CD4-positive, alpha-beta memory T cell (primary cell): ENCODE measurements at regions of chr7 and their contacts with region 1.

Region 1: DNA sequence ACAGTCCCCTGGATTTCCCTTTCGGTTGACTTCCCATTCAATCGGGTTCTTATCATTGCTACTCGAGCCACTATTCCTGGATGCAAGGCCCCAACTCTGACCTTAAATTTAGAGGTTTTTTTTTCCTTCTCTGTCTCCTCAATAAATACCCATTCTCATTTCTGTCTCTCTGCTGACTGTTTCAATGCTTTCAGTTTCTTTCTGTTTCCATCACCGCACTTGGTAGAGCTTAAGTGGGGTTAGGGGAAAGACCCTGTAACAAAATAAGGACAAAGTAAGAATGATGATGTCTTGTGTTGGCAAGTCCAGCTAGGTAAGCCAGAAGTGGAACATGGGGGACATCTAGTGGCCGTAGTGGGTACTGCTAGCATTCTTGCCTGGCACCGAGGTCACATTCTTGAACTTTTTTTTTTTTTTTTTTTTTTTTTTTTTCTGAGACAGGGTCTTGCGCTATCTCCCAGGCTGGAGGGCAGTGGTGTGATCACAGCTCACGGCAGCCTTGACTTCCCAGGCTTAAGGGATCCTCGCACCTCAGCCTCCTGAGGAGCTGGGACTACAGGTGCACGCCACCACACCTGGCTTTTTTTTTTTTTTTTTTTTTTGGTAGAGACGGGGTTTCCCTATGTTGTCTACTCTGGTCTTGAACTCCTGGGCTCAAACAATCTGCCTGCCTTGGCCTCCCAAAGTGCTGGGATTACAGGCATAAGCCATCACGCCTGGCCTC is 40.3 kb downstream of the ZC3HC1 start:
- DNase-seq: peak; percentile 79 to 83 (median 80)
- H3K4me3 ChIP-seq: no peak overlapping the region
- H3K4me3 Mint-ChIP-seq: no peak overlapping the region
- H3K27ac ChIP-seq: no peak overlapping the region
- H3K27ac Mint-ChIP-seq: peak overlapping the region in 3 of 7 donors; percentile 62 to 74 (median 65)
- H3K4me1 ChIP-seq: no peaks in the 10 kb centered on the region
- H3K4me1 Mint-ChIP-seq: peaks cover 0 to 4% (median 2%) of the 10 kb centered on the region in 4 donors
- H3K27me3 ChIP-seq: no peaks in the 10 kb centered on the region
- H3K27me3 Mint-ChIP-seq: no peaks in the 10 kb centered on the region

Region 2: DNA sequence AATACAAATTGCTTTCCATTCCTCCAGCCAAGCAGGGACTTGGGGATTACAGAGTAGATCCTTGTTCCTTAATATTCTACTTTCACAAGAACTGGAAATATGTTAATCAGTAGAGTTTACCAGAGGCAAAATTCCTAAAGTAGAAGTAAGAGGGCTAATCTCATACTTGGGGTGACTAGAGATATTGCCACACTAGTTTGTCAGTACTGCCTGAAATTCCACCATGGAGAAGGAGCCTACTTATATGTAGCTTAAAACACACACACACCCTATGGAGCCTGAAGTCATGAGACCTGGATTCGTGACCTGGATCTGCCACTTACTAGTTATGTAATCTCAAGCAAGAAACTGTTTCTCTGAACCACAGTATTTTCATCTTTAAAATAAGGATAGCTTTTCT is 542.8 kb before region 1 on chr7:
- CTCF ChIA-PET with region 1: interaction called, 4 read pairs
- POLR2A ChIA-PET with region 1: no interaction called
- intact Hi-C with region 1: loop called (anchors 5 kb)
- DNase-seq: no peak
- H3K4me3 ChIP-seq: no peak overlapping the region
- H3K4me3 Mint-ChIP-seq: no peak overlapping the region
- H3K27ac ChIP-seq: no peak overlapping the region
- H3K27ac Mint-ChIP-seq: no peak overlapping the region
- H3K4me1 ChIP-seq: no peaks in the 10 kb centered on the region
- H3K4me1 Mint-ChIP-seq: no peaks in the 10 kb centered on the region
- H3K27me3 ChIP-seq: no peaks in the 10 kb centered on the region
- H3K27me3 Mint-ChIP-seq: no peaks in the 10 kb centered on the region

Region 3: DNA sequence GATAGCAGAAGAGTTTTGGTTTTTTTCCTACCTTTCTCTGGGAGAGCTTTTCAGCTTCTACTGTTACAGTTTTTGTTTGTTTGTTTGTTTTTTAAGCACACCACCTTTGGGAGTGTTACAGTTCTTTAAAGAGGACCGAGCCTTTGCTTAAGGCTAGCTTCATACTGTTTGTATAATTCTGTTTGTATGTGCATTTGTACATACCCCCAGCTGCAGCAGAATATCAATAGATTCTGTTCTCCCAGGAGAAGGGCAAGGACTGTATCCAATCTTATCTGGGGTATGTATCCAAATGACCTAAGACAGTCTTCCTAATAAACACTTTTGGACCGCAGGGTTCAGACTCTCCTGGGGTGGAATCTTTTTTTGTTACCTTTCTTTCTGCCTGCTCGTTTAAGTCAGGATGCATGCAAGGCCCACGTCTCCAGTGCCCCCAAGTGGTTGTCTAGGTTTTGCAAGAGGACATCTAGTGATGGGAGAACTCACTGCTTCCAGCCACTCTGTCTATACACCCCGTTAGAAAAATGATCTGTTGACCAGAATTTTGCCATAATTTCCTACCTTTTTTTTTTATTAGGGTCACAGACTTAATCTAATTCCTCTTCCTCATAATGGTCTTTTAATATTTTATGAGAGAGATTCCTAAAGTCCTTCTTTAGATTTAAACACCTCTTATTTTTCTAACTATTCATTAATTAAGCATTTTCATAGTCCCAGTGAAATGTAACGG is 375.4 kb before region 1 on chr7:
- CTCF ChIA-PET with region 1: interaction called, 3 read pairs
- POLR2A ChIA-PET with region 1: no interaction called
- intact Hi-C with region 1: loop called (anchors 10 kb)
- DNase-seq: peak; percentile 58 to 70 (median 63)
- H3K4me3 ChIP-seq: no peak overlapping the region
- H3K4me3 Mint-ChIP-seq: peak overlapping the region in 1 of 8 donors; percentile 21
- H3K27ac ChIP-seq: no peak overlapping the region
- H3K27ac Mint-ChIP-seq: peak overlapping the region; percentile 5 to 73 (median 60)
- H3K4me1 ChIP-seq: peaks cover 8% of the 10 kb centered on the region
- H3K4me1 Mint-ChIP-seq: peaks cover 27 to 45% (median 30%) of the 10 kb centered on the region in 4 donors
- H3K27me3 ChIP-seq: no peaks in the 10 kb centered on the region
- H3K27me3 Mint-ChIP-seq: no peaks in the 10 kb centered on the region

Region 4: DNA sequence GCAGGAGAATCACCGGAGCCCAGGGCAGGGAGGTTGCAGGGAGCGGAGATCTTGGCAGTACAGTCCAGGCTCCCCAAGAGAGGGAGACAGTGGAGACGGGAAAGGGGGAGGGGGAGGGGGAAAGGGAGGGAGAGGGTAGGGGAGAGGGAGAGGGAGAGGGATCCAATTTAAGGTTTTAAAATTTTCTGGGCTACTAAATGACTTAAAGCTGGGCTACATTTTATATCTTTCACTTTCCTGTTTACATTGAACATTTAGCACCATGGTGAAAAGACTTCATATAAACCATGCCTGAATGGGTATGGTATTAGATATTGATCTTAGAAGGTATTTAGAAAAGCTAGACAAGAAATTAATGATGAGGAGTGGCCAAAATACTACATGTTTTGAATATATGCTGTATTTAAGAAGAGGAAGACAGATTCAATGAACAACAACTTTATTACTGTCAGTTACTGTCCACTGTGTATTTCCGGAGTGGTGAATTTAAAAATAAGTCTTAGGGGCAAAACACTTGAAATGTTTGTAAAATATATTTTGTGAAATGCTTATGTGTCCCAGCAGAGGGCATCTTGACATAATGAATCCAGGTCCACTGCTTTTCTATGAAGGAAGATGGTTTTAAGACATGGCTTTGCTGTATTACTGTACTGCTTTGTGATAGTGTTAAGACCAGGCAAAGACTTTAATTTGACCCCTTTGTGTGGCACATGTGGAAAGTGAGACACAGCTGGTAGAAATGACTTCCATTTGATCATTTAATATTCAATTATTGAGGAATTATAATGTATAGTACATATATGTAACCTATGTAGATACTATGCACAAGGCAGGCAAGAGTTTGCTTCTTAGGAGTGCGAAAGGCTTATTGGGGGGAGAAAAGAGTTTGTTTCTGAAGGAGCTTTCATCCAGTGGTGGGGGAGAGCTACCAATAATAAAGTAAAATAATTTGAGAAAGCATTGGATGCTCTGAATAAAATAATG is 346.5 kb before region 1 on chr7:
- CTCF ChIA-PET with region 1: interaction called, 7 read pairs
- POLR2A ChIA-PET with region 1: no interaction called
- intact Hi-C with region 1: loop called (anchors 10 kb)
- DNase-seq: peak in 4 of 5 donors; percentile 7 to 13 (median 10)
- H3K4me3 ChIP-seq: no peak overlapping the region
- H3K4me3 Mint-ChIP-seq: no peak overlapping the region
- H3K27ac ChIP-seq: no peak overlapping the region
- H3K27ac Mint-ChIP-seq: peak overlapping the region in 1 of 7 donors; percentile 24
- H3K4me1 ChIP-seq: no peaks in the 10 kb centered on the region
- H3K4me1 Mint-ChIP-seq: peaks cover 5 to 10% (median 7%) of the 10 kb centered on the region in 4 donors
- H3K27me3 ChIP-seq: no peaks in the 10 kb centered on the region
- H3K27me3 Mint-ChIP-seq: no peaks in the 10 kb centered on the region

Region 5: GRCh38 chr7:129952653-129953560 is 57.9 kb before region 1 on chr7 and contains the start of gene UBE2H:
- CTCF ChIA-PET with region 1: interaction called, 6 read pairs
- POLR2A ChIA-PET with region 1: interaction called, 3 read pairs
- intact Hi-C with region 1: loop called (anchors 1 kb)
- DNase-seq: peak; percentile 83 to 89 (median 86)
- H3K4me3 ChIP-seq: peak within 1 kb of the TSS; percentile 53 to 85
- H3K4me3 Mint-ChIP-seq: peak within 1 kb of the TSS; percentile 95 to 100 (median 99)
- H3K27ac ChIP-seq: peak within 1 kb of the TSS; percentile 96
- H3K27ac Mint-ChIP-seq: peak within 1 kb of the TSS in 6 of 7 donors; percentile 94 to 100 (median 100)
- H3K4me1 ChIP-seq: peaks cover 42% of the 10 kb centered on the region
- H3K4me1 Mint-ChIP-seq: peaks cover 5 to 16% (median 7%) of the 10 kb centered on the region in 4 donors
- H3K27me3 ChIP-seq: no peaks in the 10 kb centered on the region
- H3K27me3 Mint-ChIP-seq: peaks cover 0 to 2% of the 10 kb centered on the region in 2 donors
- total RNA-seq, gene UBE2H: 42.6 to 43.8 TPM

Region 6: DNA sequence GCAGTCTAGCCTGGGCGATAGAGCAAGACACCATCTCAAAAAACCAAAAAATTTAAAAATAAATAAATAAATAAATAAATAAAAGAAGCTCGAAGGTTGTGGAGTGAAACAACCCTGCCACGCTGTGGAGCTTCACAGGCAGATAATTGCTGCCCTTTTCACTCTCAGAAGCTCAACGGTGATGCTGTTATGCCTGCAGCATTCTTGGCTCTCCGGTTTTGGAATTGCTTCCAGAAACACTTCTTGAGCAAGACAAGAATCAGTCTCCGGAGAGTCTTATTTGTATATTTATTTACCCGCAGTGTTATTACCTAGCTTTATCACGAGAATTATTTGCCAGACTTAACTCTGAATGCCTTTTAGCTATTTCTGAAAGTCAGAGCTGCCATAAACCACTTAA is 17.6 kb before region 1 on chr7:
- CTCF ChIA-PET with region 1: interaction called, 10 read pairs
- POLR2A ChIA-PET with region 1: no interaction called
- intact Hi-C with region 1: no loop called
- DNase-seq: no peak
- H3K4me3 ChIP-seq: no peak overlapping the region
- H3K4me3 Mint-ChIP-seq: no peak overlapping the region
- H3K27ac ChIP-seq: no peak overlapping the region
- H3K27ac Mint-ChIP-seq: no peak overlapping the region
- H3K4me1 ChIP-seq: peaks cover 6% of the 10 kb centered on the region
- H3K4me1 Mint-ChIP-seq: peaks cover 0 to 11% (median 5%) of the 10 kb centered on the region in 4 donors
- H3K27me3 ChIP-seq: no peaks in the 10 kb centered on the region
- H3K27me3 Mint-ChIP-seq: no peaks in the 10 kb centered on the region

Region 7: DNA sequence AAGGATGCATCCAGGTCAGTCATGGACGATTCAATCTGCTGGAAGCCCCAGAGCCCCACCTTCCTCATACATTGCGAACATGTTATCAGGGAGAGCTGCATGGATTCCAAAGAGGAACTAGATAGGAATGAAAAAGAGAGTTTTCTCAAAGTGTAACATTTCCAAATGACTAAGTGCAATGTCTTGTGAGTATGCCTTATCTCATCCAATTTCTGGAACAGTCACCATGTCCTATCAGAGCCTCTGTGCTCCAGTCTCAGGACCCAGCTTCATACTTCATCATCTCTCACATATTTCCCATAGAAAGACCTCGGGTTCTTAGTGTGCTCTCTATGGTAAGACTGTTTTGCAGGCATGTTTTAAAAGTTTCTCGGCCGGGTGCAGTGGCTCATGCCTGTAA is 13.5 kb after region 1 on chr7:
- CTCF ChIA-PET with region 1: interaction called, 16 read pairs
- POLR2A ChIA-PET with region 1: no interaction called
- intact Hi-C with region 1: no loop called
- DNase-seq: no peak
- H3K4me3 ChIP-seq: no peak overlapping the region
- H3K4me3 Mint-ChIP-seq: no peak overlapping the region
- H3K27ac ChIP-seq: no peak overlapping the region
- H3K27ac Mint-ChIP-seq: no peak overlapping the region
- H3K4me1 ChIP-seq: no peaks in the 10 kb centered on the region
- H3K4me1 Mint-ChIP-seq: no peaks in the 10 kb centered on the region
- H3K27me3 ChIP-seq: no peaks in the 10 kb centered on the region
- H3K27me3 Mint-ChIP-seq: no peaks in the 10 kb centered on the region

Region 8: DNA sequence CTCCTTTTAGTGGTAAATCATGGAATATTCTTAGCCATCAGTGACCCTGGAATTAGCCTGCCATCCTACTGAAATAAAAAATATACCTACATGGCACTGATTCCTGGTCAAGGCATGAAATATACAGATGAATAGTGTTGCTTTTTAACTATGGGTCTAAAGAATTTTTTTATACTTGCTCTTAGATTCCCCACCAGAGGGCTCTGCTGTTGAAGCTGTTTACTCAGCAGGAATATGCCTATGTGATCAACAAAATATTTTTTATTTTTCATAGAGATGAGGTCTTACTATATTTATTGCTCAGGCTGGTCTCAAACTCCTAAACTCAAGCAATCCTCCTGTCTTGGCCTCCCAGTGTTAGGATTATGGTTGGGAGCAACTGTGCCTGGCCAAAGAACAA is 26.9 kb after region 1 on chr7:
- CTCF ChIA-PET with region 1: no interaction called
- POLR2A ChIA-PET with region 1: no interaction called
- intact Hi-C with region 1: no loop called
- DNase-seq: no peak
- H3K4me3 ChIP-seq: no peak overlapping the region
- H3K4me3 Mint-ChIP-seq: no peak overlapping the region
- H3K27ac ChIP-seq: no peak overlapping the region
- H3K27ac Mint-ChIP-seq: no peak overlapping the region
- H3K4me1 ChIP-seq: no peaks in the 10 kb centered on the region
- H3K4me1 Mint-ChIP-seq: peaks cover 0 to 2% (median under 1%) of the 10 kb centered on the region in 4 donors
- H3K27me3 ChIP-seq: no peaks in the 10 kb centered on the region
- H3K27me3 Mint-ChIP-seq: no peaks in the 10 kb centered on the region

Region 9: GRCh38 chr7:130096243-130096827 is 85.5 kb after region 1 on chr7:
- CTCF ChIA-PET with region 1: no interaction called
- POLR2A ChIA-PET with region 1: no interaction called
- intact Hi-C with region 1: no loop called
- DNase-seq: no peak
- H3K4me3 ChIP-seq: no peak overlapping the region
- H3K4me3 Mint-ChIP-seq: no peak overlapping the region
- H3K27ac ChIP-seq: no peak overlapping the region
- H3K27ac Mint-ChIP-seq: no peak overlapping the region
- H3K4me1 ChIP-seq: no peaks in the 10 kb centered on the region
- H3K4me1 Mint-ChIP-seq: peaks cover 6 to 14% (median 8%) of the 10 kb centered on the region in 4 donors
- H3K27me3 ChIP-seq: no peaks in the 10 kb centered on the region
- H3K27me3 Mint-ChIP-seq: no peaks in the 10 kb centered on the region

Region 10: DNA sequence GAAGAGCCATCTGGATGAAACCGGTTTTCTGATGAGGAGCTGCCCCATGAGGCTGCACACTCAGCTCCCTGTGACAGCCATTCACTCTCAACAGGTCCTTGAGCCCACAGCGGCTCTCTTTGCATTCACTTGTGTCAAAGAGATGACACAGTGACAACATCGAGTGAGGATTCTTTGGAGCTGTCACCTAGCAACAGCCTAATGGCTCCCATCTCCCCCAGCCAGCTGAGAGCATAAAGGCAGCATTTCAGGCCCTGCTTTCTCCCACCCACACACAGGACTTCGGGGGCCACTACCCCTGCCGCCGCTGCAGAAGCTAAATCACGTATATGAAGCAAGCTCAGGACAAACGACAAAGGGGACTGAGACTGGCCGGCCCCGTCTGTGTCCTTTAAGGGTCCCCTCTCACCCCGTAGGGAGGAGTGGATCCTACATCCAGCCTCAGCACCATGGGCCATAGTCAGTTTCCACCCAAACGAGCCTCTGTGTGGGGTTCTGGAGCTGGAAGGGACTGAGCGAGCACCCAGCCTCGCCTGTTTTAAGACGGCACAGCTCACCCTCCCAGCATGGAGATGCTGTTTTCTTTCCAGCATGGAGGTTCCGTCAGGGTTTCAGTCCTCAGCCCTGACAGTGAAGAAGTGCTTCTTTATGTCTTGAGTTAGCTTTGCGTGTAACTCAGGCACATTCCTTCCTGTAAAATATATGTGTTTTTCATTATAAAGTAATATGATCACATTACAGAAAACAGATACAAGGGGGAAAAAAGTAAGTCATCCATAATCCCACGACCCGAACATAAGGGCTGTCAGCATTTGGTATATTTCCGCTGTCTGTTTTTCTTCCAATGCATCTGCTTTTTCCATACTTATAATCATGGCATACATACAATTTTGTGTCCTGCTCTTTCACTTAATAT is 287.0 kb after region 1 on chr7:
- CTCF ChIA-PET with region 1: no interaction called
- POLR2A ChIA-PET with region 1: no interaction called
- intact Hi-C with region 1: no loop called
- DNase-seq: no peak
- H3K4me3 ChIP-seq: no peak overlapping the region
- H3K4me3 Mint-ChIP-seq: no peak overlapping the region
- H3K27ac ChIP-seq: no peak overlapping the region
- H3K27ac Mint-ChIP-seq: no peak overlapping the region
- H3K4me1 ChIP-seq: no peaks in the 10 kb centered on the region
- H3K4me1 Mint-ChIP-seq: peaks cover 0 to 1% (median 0%) of the 10 kb centered on the region in 4 donors
- H3K27me3 ChIP-seq: no peaks in the 10 kb centered on the region
- H3K27me3 Mint-ChIP-seq: peaks cover 4 to 6% of the 10 kb centered on the region in 2 donors

Region 11: GRCh38 chr7:130543487-130544010 is 532.7 kb after region 1 on chr7:
- CTCF ChIA-PET with region 1: no interaction called
- POLR2A ChIA-PET with region 1: no interaction called
- intact Hi-C with region 1: no loop called
- DNase-seq: no peak
- H3K4me3 ChIP-seq: no peak overlapping the region
- H3K4me3 Mint-ChIP-seq: no peak overlapping the region
- H3K27ac ChIP-seq: no peak overlapping the region
- H3K27ac Mint-ChIP-seq: no peak overlapping the region
- H3K4me1 ChIP-seq: no peaks in the 10 kb centered on the region
- H3K4me1 Mint-ChIP-seq: no peaks in the 10 kb centered on the region
- H3K27me3 ChIP-seq: no peaks in the 10 kb centered on the region
- H3K27me3 Mint-ChIP-seq: no peaks in the 10 kb centered on the region